Dendritic cell treated with granulocyte-macrophage colony-stimulating factor and Interleukin-4, amounts not matched to agents 40 ng/mL and 50 ng/mL, for 4 days (primary cell): ENCODE measurements at regions of chr4 and their contacts with region 1.

Region 1: DNA sequence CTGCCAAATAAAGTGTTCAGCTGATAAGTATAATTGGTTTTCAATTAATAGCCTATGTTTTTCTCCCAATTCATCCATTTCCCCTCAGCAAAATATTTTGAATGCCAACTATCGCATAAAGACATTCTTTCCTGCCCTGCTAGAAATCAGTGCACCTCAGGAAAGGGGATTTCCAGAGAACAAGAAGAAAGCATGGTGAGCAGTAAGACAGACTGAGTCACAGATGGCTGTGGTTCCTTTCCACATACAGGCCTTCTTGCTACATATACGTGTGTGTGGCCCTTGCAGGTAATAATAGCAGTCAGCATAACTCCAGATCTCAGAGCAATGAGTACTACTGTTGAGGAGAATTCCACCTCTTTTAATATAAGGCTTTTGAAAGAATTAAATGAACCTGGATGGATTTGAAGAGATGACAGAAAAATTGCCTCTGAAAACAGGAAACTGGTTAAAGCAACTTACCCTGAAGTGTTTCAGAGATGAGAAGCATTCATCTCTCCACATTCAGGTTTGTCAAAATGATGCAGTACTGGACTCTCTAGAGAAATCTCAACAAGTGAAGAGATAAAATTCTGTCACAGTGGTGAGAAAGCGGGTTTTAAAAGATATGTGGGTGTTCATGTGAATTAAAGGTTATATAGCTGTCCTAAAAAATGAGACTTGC is 13.6 kb downstream of the GASK1B start:
- H3K4me3 Mint-ChIP-seq: no peak overlapping the region
- H3K27ac Mint-ChIP-seq: peak overlapping the region; percentile 54
- H3K4me1 Mint-ChIP-seq: peaks cover 79% of the 10 kb centered on the region
- H3K27me3 Mint-ChIP-seq: no peaks in the 10 kb centered on the region

Region 2: GRCh38 chr4:157929486-157929885 is 229.7 kb before region 1 on chr4:
- intact Hi-C with region 1: no loop called
- H3K4me3 Mint-ChIP-seq: no peak overlapping the region
- H3K27ac Mint-ChIP-seq: no peak overlapping the region
- H3K4me1 Mint-ChIP-seq: no peaks in the 10 kb centered on the region
- H3K27me3 Mint-ChIP-seq: peaks cover 1% of the 10 kb centered on the region

Region 3: GRCh38 chr4:158121187-158121586 is 38.0 kb before region 1 on chr4:
- intact Hi-C with region 1: loop called (anchors 5 kb)
- H3K4me3 Mint-ChIP-seq: no peak overlapping the region
- H3K27ac Mint-ChIP-seq: no peak overlapping the region
- H3K4me1 Mint-ChIP-seq: peaks cover 25% of the 10 kb centered on the region
- H3K27me3 Mint-ChIP-seq: no peaks in the 10 kb centered on the region